Endothelial cell of umbilical vein (primary cell): ENCODE measurements at regions of chr12 and their contacts with region 1.

Region 1: GRCh38 chr12:113196996-113197395 is 11.5 kb downstream of the RITA1 start:
- DNase-seq: peak; percentile 82
- H3K4me3 ChIP-seq: no peak overlapping the region
- H3K27ac ChIP-seq: no peak overlapping the region
- H3K4me1 ChIP-seq: peaks cover 23% of the 10 kb centered on the region
- H3K27me3 ChIP-seq: no peaks in the 10 kb centered on the region
- CTCF ChIP-seq: peak; percentile 63 to 81
- POLR2A ChIP-seq: no peak

Region 2: GRCh38 chr12:113161414-113162016 is 35.5 kb before region 1 on chr12:
- CTCF ChIA-PET with region 1: no interaction called
- POLR2A ChIA-PET with region 1: no interaction called
- dilution Hi-C with region 1: no loop called
- intact Hi-C with region 1: no loop called
- DNase-seq: no peak
- H3K4me3 ChIP-seq: no peak overlapping the region
- H3K27ac ChIP-seq: no peak overlapping the region
- H3K4me1 ChIP-seq: no peaks in the 10 kb centered on the region
- H3K27me3 ChIP-seq: no peaks in the 10 kb centered on the region
- CTCF ChIP-seq: no peak
- POLR2A ChIP-seq: no peak

Region 3: DNA sequence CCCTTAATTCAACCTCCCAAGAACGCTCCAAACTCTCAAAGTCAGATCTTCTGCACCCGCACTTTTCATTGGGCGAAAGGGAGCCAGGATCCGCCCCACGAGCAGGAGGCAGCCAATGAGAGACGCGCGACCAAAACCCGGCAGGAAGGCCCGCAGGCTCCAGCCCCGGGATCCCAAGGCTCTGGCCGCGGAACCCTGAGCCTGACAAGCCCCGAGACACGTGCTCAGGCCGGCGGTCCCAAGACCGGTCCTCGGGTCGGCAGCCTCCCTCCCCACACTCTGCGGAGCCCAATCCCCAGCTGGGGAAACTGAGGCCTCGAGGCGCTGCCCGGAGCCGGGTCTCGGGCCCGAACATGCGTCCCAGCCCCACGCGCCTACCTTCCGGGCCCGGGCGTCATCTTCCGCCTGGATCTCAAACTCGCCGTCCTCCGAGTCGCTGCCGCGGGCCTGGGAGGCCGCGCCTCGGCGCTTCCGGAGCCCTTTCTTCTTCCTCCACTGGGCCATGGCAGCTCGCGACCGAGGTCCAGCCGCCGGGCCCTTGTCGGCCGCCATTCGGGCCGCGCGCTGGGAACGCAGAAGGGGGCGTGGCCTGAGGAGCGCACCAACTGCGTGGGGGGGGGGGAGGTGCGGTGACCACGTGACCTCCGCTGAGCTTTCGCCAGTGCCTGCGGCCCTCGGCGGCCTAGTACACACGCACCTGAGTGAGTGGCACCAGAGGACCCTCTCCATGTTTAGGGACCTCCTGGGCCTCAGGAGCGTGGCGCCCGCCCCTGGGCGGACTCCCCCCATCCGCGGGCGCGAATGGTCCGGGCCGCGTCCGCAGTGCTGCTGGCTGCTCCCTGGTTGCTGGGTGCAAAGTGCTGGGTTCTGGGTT is 11.9 kb before region 1 on chr12 and contains the starts of genes DDX54 and RITA1:
- CTCF ChIA-PET with region 1: interaction called, 6 read pairs
- POLR2A ChIA-PET with region 1: no interaction called
- dilution Hi-C with region 1: no loop called
- intact Hi-C with region 1: loop called (anchors 1 kb)
- DNase-seq: peak; percentile 93
- H3K4me3 ChIP-seq: peak within 1 kb of the TSS; percentile 45 to 79 (median 76)
- H3K27ac ChIP-seq: peak within 1 kb of the TSS; percentile 67
- H3K4me1 ChIP-seq: peaks cover 12% of the 10 kb centered on the region
- H3K27me3 ChIP-seq: no peaks in the 10 kb centered on the region
- CTCF ChIP-seq: no peak
- POLR2A ChIP-seq: peak; percentile 91
- total RNA-seq, gene DDX54: 76.4 and 90.0 TPM in 2 replicates
- total RNA-seq, gene RITA1: 20.4 and 20.7 TPM in 2 replicates

Region 4: DNA sequence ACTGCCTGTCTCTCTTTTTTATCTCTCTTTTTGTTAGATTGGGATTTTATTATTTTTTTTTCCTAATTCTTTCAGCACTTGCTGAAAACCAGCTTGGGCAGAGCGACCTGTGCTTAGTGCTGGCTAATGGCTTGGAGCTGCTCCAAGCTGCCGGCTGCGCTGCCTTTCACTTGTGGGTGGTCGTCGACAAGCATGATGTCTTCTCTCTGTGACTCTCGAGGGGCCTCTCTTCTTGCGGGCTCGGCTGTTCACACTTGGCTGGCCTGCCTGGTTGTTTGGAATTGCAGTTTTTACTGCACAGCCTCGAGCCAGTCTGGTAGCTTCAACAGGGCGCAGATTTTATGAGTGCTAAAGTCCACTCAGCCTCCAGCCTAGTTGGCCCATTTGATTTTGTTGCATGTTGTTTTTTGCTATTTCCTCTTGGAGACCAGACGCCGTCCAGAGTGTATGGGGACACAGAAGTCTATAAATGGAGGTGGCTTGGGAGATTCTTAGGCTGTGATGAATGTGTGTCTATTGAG is 42.9 kb after region 1 on chr12:
- CTCF ChIA-PET with region 1: interaction called, 10 read pairs
- POLR2A ChIA-PET with region 1: no interaction called
- dilution Hi-C with region 1: no loop called
- intact Hi-C with region 1: loop called (anchors 2 kb)
- DNase-seq: no peak
- H3K4me3 ChIP-seq: no peak overlapping the region
- H3K27ac ChIP-seq: no peak overlapping the region
- H3K4me1 ChIP-seq: peaks cover 24% of the 10 kb centered on the region
- H3K27me3 ChIP-seq: no peaks in the 10 kb centered on the region
- CTCF ChIP-seq: no peak
- POLR2A ChIP-seq: no peak

Region 5: GRCh38 chr12:113310489-113310888 is 113.5 kb after region 1 on chr12:
- CTCF ChIA-PET with region 1: interaction called, 7 read pairs
- POLR2A ChIA-PET with region 1: no interaction called
- dilution Hi-C with region 1: no loop called
- intact Hi-C with region 1: loop called (anchors 1 kb)
- DNase-seq: no peak
- H3K4me3 ChIP-seq: no peak overlapping the region
- H3K27ac ChIP-seq: no peak overlapping the region
- H3K4me1 ChIP-seq: no peaks in the 10 kb centered on the region
- H3K27me3 ChIP-seq: no peaks in the 10 kb centered on the region
- CTCF ChIP-seq: no peak
- POLR2A ChIP-seq: no peak

Region 6: DNA sequence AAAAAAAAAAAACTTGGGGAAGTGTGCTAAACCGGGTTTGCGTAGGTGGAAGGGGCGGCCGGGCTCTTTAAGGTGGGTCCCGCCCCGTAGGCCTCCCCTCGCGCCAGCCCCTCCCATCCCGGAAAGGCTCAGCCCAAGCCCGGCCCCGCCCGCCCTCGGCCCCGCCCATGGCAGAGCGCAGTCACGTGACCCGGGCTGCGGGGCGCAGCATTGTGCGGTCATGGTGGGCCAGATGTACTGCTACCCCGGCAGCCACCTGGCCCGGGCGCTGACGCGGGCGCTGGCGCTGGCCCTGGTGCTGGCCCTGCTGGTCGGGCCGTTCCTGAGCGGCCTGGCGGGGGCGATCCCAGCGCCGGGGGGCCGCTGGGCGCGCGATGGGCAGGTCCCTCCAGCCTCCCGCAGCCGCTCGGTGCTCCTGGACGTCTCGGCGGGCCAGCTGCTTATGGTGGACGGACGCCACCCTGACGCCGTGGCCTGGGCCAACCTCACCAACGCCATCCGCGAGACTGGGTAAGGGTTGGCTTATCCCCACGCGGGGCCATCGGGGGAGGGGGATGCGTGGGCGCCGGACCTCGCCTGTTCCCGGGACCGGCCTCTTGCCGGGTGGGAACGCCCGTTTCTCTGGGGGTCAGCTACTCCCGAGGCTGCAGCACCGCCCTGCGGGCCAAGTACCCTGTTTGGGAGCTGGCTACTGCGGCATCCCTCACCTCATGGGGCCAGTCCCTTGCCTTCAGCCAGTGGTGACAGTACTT is 161.6 kb after region 1 on chr12 and contains the start of gene PLBD2:
- CTCF ChIA-PET with region 1: interaction called, 4 read pairs
- POLR2A ChIA-PET with region 1: no interaction called
- dilution Hi-C with region 1: no loop called
- intact Hi-C with region 1: loop called (anchors 1 kb)
- DNase-seq: peak; percentile 95
- H3K4me3 ChIP-seq: peak within 1 kb of the TSS; percentile 35 to 62 (median 57)
- H3K27ac ChIP-seq: peak within 1 kb of the TSS; percentile 20
- H3K4me1 ChIP-seq: peaks cover 6% of the 10 kb centered on the region
- H3K27me3 ChIP-seq: no peaks in the 10 kb centered on the region
- CTCF ChIP-seq: no peak
- POLR2A ChIP-seq: peak; percentile 70
- total RNA-seq, gene PLBD2: 44.8 and 46.8 TPM in 2 replicates

Region 7: GRCh38 chr12:113912760-113913329 is 715.8 kb after region 1 on chr12:
- CTCF ChIA-PET with region 1: no interaction called
- POLR2A ChIA-PET with region 1: no interaction called
- dilution Hi-C with region 1: no loop called
- intact Hi-C with region 1: loop called (anchors 1 kb)
- DNase-seq: peak; percentile 79
- H3K4me3 ChIP-seq: no peak overlapping the region
- H3K27ac ChIP-seq: no peak overlapping the region
- H3K4me1 ChIP-seq: no peaks in the 10 kb centered on the region
- H3K27me3 ChIP-seq: no peaks in the 10 kb centered on the region
- CTCF ChIP-seq: peak; percentile 89 to 91
- POLR2A ChIP-seq: no peak